Activated CD4-positive, alpha-beta T cell treated with anti-CD3 and anti-CD28 coated beads, Interleukin-2, amount 10 ng/mL, durations not matched to agents 7 days and 5 days (primary cell): ENCODE measurements at regions of chr12 and their contacts with region 1.

Region 1: DNA sequence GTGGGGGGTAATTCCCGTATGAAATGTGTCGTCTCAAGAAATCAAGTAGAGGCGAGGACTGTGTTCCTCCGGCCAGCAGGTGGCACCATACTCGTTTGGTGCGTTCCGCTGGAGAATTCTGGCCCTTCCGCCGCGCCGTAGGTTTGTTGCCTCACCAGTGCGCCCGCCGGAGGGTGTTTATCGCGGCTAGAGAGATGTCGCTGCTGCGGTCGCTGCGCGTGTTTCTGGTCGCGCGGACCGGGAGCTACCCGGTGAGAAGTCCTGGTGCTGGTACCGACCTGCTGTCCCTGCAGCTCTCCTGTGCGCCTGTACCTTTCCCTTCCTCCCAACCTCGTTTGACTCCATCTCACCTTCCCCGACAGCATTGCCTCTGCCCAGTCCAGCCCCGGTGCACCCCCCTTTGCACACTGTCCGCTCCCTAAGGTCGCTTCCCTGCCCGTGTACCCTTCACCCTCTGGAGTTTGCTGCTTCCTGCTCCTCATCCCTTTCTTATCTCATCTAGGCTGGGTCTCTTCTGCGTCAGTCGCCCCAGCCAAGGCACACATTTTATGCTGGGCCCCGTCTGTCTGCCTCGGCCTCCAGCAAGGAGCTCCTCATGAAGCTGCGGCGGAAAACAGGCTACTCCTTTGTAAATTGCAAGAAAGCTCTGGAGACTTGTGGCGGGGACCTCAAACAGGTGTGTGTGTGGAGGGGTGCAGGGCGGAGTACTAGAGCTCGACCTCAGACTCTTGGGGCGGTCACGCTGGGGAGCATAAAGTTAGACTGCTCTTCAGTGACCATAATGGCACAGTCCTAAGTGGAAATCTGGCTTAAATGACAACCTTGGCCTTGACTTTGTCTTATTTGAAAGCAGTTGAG is at the start of gene TSFM:
- DNase-seq: peak; percentile 98
- H3K4me3 Mint-ChIP-seq: peak within 1 kb of the TSS; percentile 99
- H3K27ac Mint-ChIP-seq: peak within 1 kb of the TSS; percentile 96
- H3K4me1 Mint-ChIP-seq: peaks cover 42% of the 10 kb centered on the region
- H3K27me3 Mint-ChIP-seq: no peaks in the 10 kb centered on the region
- total RNA-seq, gene TSFM: 23.6 to 29.7 TPM

Region 2: DNA sequence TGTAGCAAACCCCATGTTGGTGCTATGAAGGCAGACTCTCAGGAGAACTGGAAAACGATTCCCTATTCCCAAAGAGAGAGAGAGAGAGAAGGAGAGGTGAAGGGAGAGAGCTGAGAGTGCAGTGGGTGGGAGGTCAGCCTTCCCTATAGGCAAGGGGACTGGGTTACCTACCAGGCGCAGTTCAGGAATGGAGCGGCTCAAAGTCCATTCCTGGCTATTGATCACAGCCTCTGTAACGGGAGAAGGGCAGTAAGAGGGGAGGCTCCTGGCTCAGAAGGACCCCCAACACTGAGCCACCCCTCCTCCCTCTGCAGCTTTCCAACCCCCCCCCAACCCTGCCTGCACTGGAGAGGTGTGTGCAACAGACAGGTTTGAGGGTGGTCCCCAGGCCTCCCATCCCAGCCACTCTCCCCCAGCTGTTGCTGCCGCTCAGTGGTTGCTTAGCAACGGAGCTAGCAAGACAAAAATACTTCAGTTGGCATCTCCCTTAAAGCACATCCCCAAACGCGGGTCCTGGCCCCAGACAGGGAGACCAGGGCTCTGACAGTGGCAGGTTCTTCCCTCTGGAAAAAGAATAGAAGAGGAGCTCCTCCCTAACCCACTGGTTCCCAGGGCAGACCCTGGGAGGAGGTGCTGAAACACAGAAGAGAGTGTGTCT is 47.5 kb before region 1 on chr12:
- CTCF ChIA-PET with region 1: no interaction called
- POLR2A ChIA-PET with region 1: no interaction called
- DNase-seq: no peak
- H3K4me3 Mint-ChIP-seq: no peak overlapping the region
- H3K27ac Mint-ChIP-seq: no peak overlapping the region
- H3K4me1 Mint-ChIP-seq: peaks cover 19% of the 10 kb centered on the region
- H3K27me3 Mint-ChIP-seq: no peaks in the 10 kb centered on the region

Region 3: GRCh38 chr12:57793920-57794319 is 11.1 kb after region 1 on chr12:
- CTCF ChIA-PET with region 1: interaction called, 14 read pairs
- POLR2A ChIA-PET with region 1: no interaction called
- DNase-seq: no peak
- H3K4me3 Mint-ChIP-seq: no peak overlapping the region
- H3K27ac Mint-ChIP-seq: no peak overlapping the region
- H3K4me1 Mint-ChIP-seq: peaks cover 4% of the 10 kb centered on the region
- H3K27me3 Mint-ChIP-seq: no peaks in the 10 kb centered on the region